ENCODE measurements at regions of chr9 and their contacts with region 1.

Region 1: GRCh38 chr9:133478851-133479711 is at the start of gene SLC2A6:
- H3K4me3 ChIP-seq: peak within 1 kb of the TSS; percentile 52
- H3K27ac ChIP-seq: no peak within 1 kb of the TSS; the same call in 1 of the 2 replicates
- H3K4me1 ChIP-seq: no peaks in the 10 kb centered on the region
- CTCF ChIP-seq: no peak

Region 2: DNA sequence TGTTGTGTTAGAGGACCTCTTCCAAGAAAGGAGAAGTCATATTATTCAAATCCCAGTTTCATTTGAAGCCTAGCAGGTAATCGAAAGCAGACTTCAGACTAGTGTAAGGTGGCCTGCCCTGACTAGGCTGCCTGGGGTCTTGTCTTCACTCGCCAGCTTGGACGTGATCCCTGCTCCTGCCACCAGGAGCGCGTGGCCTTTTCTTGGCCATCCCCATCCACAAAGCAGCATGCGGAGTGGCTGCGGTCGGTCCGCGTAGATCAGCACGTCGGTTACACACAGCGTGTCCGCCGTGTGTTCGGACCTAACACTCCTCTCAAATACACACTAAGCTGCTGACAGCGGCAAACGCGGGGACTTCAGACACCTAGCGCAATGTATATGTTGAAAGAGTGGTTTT is 1031.7 kb before region 1 on chr9:
- CTCF ChIA-PET with region 1: no interaction called
- POLR2A ChIA-PET with region 1: no interaction called
- H3K4me3 ChIP-seq: no peak overlapping the region
- H3K27ac ChIP-seq: no peak overlapping the region
- H3K4me1 ChIP-seq: no peaks in the 10 kb centered on the region
- CTCF ChIP-seq: no peak

Region 3: DNA sequence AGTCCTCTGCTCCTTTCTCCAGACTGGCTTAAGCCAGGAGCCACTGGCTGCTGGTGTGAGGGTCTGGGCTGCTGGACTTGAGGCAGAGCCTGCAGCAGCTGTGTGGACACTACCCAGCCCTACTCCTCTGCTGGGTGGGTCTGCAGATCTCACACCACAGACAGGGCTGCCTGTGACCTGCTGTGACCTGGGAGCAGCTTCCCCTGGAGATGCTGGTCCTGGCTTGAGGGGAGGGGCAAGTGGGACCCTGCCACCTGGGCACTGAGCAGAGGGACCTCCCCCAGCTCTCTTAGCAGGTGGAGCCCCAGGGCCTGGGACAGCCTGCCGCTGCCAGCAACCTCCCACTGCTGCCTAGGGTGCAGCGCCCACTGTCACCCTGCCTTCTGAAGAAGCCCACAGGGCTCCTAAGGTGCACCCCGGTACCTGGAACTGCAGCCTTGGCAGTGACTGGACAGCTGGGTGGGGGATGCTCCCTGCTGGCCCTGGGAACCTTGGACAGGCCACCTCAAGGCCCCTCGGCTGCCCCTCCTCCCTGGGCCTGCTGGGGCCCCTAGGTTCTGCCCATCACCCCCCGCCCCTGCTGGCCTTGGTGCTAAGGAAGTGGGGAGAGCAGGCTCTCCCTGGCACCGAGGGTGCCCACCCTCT is 10.2 kb before region 1 on chr9:
- CTCF ChIA-PET with region 1: no interaction called
- POLR2A ChIA-PET with region 1: interaction called, 12 read pairs
- H3K4me3 ChIP-seq: no peak overlapping the region
- H3K27ac ChIP-seq: no peak overlapping the region
- H3K4me1 ChIP-seq: no peaks in the 10 kb centered on the region
- CTCF ChIP-seq: no peak

Region 4: GRCh38 chr9:133506653-133507038 is 27.6 kb after region 1 on chr9:
- CTCF ChIA-PET with region 1: no interaction called
- POLR2A ChIA-PET with region 1: no interaction called
- H3K4me3 ChIP-seq: no peak overlapping the region
- H3K27ac ChIP-seq: no peak overlapping the region
- H3K4me1 ChIP-seq: peaks cover 8% of the 10 kb centered on the region
- CTCF ChIP-seq: no peak